ENCODE measurements at regions of chr16 and their contacts with region 1.

Region 1: DNA sequence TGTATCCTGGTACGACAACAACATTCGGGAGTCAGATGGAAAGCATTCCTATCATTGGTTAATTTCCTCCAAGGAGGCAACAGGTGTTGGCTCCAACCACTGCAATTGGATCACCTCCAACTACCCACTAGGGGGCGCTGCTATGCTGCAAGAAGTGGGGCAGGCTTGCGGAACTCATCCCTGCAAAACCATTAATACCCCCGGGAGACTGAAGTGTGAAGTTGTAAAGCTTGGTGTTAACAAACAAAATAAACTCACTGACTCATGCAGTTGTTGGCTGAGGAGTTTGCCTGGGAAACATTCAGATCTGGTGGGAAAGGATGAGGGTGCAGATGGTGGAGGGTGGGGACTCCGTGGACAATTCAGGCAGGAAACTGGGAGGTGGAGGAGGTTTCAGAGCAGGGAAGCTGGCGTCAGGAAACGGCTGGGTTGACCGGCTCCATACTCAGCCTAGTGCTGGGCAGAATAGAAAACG is 84.9 kb downstream of the HS3ST2 start:
- DNase-seq: peak; percentile 53 to 69
- ATAC-seq: peak; percentile 81 to 91
- H3K4me3 ChIP-seq: no peak overlapping the region
- H3K27ac ChIP-seq: no peak overlapping the region
- H3K4me1 ChIP-seq: no peaks in the 10 kb centered on the region
- H3K27me3 ChIP-seq: peaks cover 0 to 5% (median 4%) of the 10 kb centered on the region in 3 donors
- CTCF ChIP-seq: peak; percentile 73 to 85 (median 78)
- POLR2A ChIP-seq: no peak

Region 2: DNA sequence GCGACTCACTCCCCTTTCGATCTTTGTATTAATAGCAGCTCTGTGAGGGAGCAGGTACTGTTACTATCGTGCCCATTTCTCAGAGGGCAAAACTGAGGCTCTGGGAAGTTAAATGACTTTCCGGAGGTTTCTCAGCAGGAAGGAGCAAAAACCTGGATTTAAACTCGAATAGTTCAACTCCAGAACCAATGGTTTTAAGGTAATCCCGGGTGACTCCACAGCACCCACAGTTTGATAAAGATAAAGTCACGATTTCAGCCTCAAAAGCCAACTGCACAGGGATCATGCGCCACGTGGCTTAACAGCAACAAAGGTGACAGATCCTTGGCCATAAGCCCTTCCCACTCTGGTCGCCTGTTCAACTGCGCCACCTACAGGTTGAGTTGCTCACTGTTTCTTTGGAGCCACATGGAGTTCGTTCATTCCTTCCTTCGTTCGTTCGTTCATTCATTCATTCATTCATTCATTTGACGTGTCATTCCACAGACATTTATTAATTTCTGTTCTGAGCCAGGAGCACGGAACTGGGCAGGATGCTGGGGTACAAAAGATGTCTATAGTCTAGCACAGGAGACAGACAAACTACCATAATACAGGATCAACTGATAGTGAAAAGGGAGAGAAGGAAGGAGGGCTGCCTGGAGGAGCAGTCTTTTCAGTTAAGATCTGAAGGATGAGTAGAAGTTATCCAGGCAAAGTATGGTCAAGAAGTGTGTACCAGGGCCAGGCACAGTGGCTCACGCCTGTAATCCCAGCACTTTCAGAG is 49.9 kb after region 1 on chr16:
- in situ Hi-C with region 1: no loop called
- intact Hi-C with region 1: loop called (anchors 1 kb)
- DNase-seq: peak; percentile 31 to 59
- ATAC-seq: peak; percentile 88 to 93
- H3K4me3 ChIP-seq: peak overlapping the region in 2 of 4 donors; percentile 19 to 42
- H3K27ac ChIP-seq: no peak overlapping the region
- H3K4me1 ChIP-seq: peaks cover 7% of the 10 kb centered on the region in 2 donors
- H3K27me3 ChIP-seq: no peaks in the 10 kb centered on the region
- CTCF ChIP-seq: peak; percentile 60 to 73 (median 66)
- POLR2A ChIP-seq: no peak

Region 3: GRCh38 chr16:22977294-22977697 is 78.4 kb after region 1 on chr16:
- in situ Hi-C with region 1: no loop called
- intact Hi-C with region 1: loop called (anchors 5 kb)
- DNase-seq: no peak
- ATAC-seq: peak in 1 of 2 donors; percentile 46
- H3K4me3 ChIP-seq: no peak overlapping the region
- H3K27ac ChIP-seq: no peak overlapping the region
- H3K4me1 ChIP-seq: no peaks in the 10 kb centered on the region
- H3K27me3 ChIP-seq: no peaks in the 10 kb centered on the region
- CTCF ChIP-seq: peak; percentile 12 to 44 (median 29)
- POLR2A ChIP-seq: no peak

Region 4: GRCh38 chr16:23060458-23061320 is 161.8 kb after region 1 on chr16:
- in situ Hi-C with region 1: loop called in 1 of 4 experiments (anchors 10 kb)
- intact Hi-C with region 1: loop called (anchors 5 kb)
- DNase-seq: peak; percentile 23 to 55
- ATAC-seq: peak; percentile 76 to 92
- H3K4me3 ChIP-seq: no peak overlapping the region
- H3K27ac ChIP-seq: no peak overlapping the region
- H3K4me1 ChIP-seq: peaks cover 4 to 7% of the 10 kb centered on the region in 2 donors
- H3K27me3 ChIP-seq: peaks cover 0 to 3% (median 0%) of the 10 kb centered on the region in 3 donors
- CTCF ChIP-seq: peak; percentile 61 to 82 (median 61)
- POLR2A ChIP-seq: no peak

Region 5: DNA sequence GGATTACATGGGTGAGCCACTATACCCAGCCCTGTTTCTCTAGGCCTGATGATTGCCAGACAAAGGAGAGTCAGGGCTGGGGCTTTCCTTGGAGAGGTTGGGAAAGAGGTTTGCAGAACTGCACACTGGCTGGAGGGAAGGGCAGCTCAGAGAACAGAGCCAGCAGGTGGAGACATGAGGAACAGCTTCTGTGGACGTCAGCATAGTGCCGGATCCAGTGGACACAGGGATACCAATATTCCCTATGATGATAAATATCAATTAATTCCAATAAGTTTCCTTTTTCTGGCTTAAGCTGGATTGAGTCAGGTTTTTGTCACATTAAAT is 360.0 kb after region 1 on chr16:
- in situ Hi-C with region 1: no loop called
- intact Hi-C with region 1: no loop called
- DNase-seq: no peak
- ATAC-seq: no peak
- H3K4me3 ChIP-seq: no peak overlapping the region
- H3K27ac ChIP-seq: no peak overlapping the region
- H3K4me1 ChIP-seq: no peaks in the 10 kb centered on the region
- H3K27me3 ChIP-seq: peaks cover 0 to 1% (median 0%) of the 10 kb centered on the region in 3 donors
- CTCF ChIP-seq: no peak
- POLR2A ChIP-seq: no peak